ENCODE measurements at regions of chr12 and their contacts with region 1.

Region 1: GRCh38 chr12:116135209-116135930 is 142.1 kb downstream of the MED13L start:
- DNase-seq: no peak
- ATAC-seq: peak in 3 of 4 donors; percentile 49 to 64 (median 57)
- H3K4me3 ChIP-seq: no peak overlapping the region
- H3K27ac ChIP-seq: peak overlapping the region in 1 of 12 donors; percentile 18
- H3K4me1 ChIP-seq: peaks cover 3 to 83% (median 44%) of the 10 kb centered on the region in 12 donors
- H3K27me3 ChIP-seq: no peaks in the 10 kb centered on the region
- CTCF ChIP-seq: no peak
- POLR2A ChIP-seq: no peak

Region 2: DNA sequence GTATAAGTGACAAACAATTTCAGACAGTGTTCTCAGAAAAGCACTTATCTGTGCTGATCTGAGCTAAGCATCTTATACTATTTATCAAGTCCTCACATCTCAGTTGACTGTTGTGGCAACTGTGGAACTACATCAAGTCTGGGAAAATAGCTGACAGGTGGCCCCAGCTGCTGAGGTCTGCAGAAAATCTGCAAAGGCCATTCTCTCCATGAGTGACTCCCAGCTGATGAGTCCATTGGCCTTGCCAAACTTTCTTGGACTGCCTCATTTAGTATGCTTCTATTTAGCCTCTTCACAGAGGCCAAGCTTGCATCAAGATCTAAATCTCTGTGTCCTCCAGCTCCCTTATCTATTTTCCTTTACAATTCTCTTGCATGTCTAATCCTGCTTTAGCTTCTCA is 1994.8 kb before region 1 on chr12:
- intact Hi-C with region 1: loop called in 1 of 10 experiments (anchors 10 kb)
- DNase-seq: peak in 1 of 5 donors; percentile 36
- ATAC-seq: peak in 1 of 4 donors; percentile 24
- H3K4me3 ChIP-seq: no peak overlapping the region
- H3K27ac ChIP-seq: no peak overlapping the region
- H3K4me1 ChIP-seq: no peaks in the 10 kb centered on the region
- H3K27me3 ChIP-seq: peaks cover 0 to 6% (median 0%) of the 10 kb centered on the region in 9 donors
- CTCF ChIP-seq: no peak
- POLR2A ChIP-seq: no peak

Region 3: DNA sequence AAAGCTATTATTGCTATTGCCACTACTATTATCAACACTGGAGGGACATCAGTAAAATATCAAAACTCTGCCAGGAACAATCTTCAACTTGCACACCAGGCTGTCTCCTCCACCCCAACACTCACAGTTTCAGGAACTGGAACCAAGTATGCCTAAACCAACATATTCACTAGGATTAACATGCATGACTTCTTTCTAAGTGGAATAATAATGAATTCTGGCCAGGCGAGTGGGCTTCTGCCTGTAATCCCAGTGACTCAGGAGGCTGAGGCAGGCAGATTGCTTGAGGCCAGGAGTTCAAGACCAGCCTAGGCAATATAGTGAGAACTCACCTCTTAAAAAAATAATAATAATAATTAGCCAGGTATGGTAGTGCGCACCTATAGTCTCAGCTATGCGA is 1787.5 kb before region 1 on chr12:
- intact Hi-C with region 1: no loop called
- DNase-seq: no peak
- ATAC-seq: no peak
- H3K4me3 ChIP-seq: no peak overlapping the region
- H3K27ac ChIP-seq: no peak overlapping the region
- H3K4me1 ChIP-seq: no peaks in the 10 kb centered on the region
- H3K27me3 ChIP-seq: no peaks in the 10 kb centered on the region
- CTCF ChIP-seq: no peak
- POLR2A ChIP-seq: no peak

Region 4: DNA sequence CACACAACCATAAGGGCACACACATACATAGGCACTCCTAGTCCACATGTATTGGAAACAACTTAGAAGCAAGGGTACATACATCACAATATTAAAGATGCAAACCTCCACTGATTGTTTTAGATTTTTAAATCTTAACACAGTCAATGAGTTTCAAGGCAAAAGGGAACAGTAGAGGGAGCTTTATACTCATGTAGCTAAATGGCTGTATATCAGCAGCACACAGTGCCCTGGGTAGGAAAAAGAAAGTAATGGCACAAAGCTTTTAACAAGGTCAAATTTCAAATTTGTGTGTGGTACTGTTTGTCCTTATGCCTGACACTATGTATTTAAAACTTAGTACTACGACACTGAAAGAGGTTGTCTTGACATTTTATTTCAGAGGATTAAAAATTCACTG is 119.8 kb before region 1 on chr12:
- intact Hi-C with region 1: loop called in 3 of 10 experiments (anchors 10 kb)
- DNase-seq: no peak
- ATAC-seq: peak; percentile 62 to 86 (median 78)
- H3K4me3 ChIP-seq: no peak overlapping the region
- H3K27ac ChIP-seq: no peak overlapping the region
- H3K4me1 ChIP-seq: peaks cover 0 to 16% (median 10%) of the 10 kb centered on the region in 12 donors
- H3K27me3 ChIP-seq: no peaks in the 10 kb centered on the region
- CTCF ChIP-seq: peak; percentile 20 to 78 (median 58)
- POLR2A ChIP-seq: no peak